Gastrocnemius medialis (tissue), 4 donors: ENCODE measurements at regions of chr3 and their contacts with region 1.

Region 1: DNA sequence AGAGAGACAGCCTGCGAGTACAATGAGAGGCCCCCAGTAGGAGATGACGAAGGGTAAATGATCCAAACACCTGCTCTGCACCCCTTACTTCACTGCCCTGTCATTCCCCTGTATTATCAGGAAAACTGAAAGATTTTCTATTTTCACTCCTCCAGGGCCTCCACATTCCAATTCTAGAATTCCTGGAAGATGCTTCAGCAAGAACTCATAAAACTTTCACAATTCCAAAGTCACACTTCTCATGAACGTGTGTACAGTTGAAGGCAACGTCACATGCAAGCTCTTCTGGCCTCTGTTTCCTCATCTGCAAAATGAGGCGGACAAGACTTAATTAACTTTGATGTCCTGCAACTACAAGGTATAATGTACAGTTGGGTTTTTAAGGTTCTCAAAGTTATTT is 62.8 kb upstream of the SPATA12 start:
- DNase-seq: no peak
- ATAC-seq: no peak
- H3K4me3 ChIP-seq: no peak overlapping the region
- H3K27ac ChIP-seq: no peak overlapping the region
- H3K4me1 ChIP-seq: no peaks in the 10 kb centered on the region
- H3K27me3 ChIP-seq: no peaks in the 10 kb centered on the region
- CTCF ChIP-seq: no peak
- POLR2A ChIP-seq: no peak

Region 2: GRCh38 chr3:56547486-56547885 is 450.2 kb before region 1 on chr3:
- in situ Hi-C with region 1: no loop called
- intact Hi-C with region 1: no loop called
- DNase-seq: no peak
- ATAC-seq: no peak
- H3K4me3 ChIP-seq: no peak overlapping the region
- H3K27ac ChIP-seq: no peak overlapping the region
- H3K4me1 ChIP-seq: no peaks in the 10 kb centered on the region
- H3K27me3 ChIP-seq: no peaks in the 10 kb centered on the region
- CTCF ChIP-seq: no peak
- POLR2A ChIP-seq: no peak

Region 3: GRCh38 chr3:56955492-56956111 is 42.1 kb before region 1 on chr3:
- in situ Hi-C with region 1: no loop called
- intact Hi-C with region 1: no loop called
- DNase-seq: peak in 1 of 2 donors; percentile 17
- ATAC-seq: peak in 1 of 2 donors; percentile 95
- H3K4me3 ChIP-seq: no peak overlapping the region
- H3K27ac ChIP-seq: peak overlapping the region in 1 of 4 donors; percentile 77
- H3K4me1 ChIP-seq: peaks cover 0 to 19% of the 10 kb centered on the region in 2 donors
- H3K27me3 ChIP-seq: no peaks in the 10 kb centered on the region
- CTCF ChIP-seq: no peak
- POLR2A ChIP-seq: no peak

Region 4: GRCh38 chr3:57078344-57078634 is 80.6 kb after region 1 on chr3:
- in situ Hi-C with region 1: no loop called
- intact Hi-C with region 1: loop called (anchors 2 kb)
- DNase-seq: peak; percentile 42 to 47
- ATAC-seq: peak; percentile 58 to 72
- H3K4me3 ChIP-seq: peak overlapping the region; percentile 60 to 83 (median 68)
- H3K27ac ChIP-seq: no peak overlapping the region
- H3K4me1 ChIP-seq: peaks cover 0 to 12% of the 10 kb centered on the region in 2 donors
- H3K27me3 ChIP-seq: peaks cover 9 to 24% (median 14%) of the 10 kb centered on the region in 3 donors
- CTCF ChIP-seq: no peak
- POLR2A ChIP-seq: no peak